GM12878 (cell line): ENCODE measurements at regions of chr12 and their contacts with region 1.

Region 1: GRCh38 chr12:79737875-79738718 is 47.3 kb upstream of the PAWR start:
- DNase-seq: peak; percentile 16
- ATAC-seq: peak; percentile 94
- H3K4me3 ChIP-seq: no peak overlapping the region
- H3K27ac ChIP-seq: no peak overlapping the region
- H3K4me1 ChIP-seq: no peaks in the 10 kb centered on the region
- H3K27me3 ChIP-seq: no peaks in the 10 kb centered on the region; a peak in 1 of 4 replicates
- CTCF ChIP-seq: peak; percentile 62 to 73 (median 65)
- EP300 ChIP-seq: no peak
- POLR2A ChIP-seq: no peak
- RAD21 ChIP-seq: peak; percentile 80

Region 2: DNA sequence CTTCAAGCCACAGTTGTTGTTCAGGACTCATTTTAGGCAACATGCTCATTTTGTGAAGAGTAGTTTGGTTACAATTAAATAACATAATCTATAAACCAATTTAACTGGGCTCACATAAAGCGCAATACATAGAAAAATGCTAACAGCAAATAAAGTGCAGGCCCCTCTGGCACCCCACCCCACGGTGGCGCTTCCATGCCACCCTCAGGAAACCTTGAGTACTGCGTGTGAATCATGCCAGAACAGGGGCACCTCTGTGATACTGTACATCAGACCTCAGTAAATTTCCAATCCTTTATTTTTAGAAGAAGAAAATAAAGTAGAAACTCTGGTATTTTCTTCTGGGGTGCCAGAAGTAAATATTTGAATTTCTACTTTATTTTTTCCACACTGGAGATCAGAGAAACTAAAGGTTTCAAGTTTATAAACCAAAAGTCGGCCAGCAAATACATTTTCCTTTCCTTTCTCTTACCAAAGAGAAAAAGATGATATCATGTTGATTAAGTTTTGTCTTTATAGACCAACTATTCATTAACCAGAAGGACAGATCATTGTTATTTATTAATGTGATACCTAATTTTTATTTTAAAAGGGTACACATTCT is 364.1 kb before region 1 on chr12:
- CTCF ChIA-PET with region 1: no interaction called
- POLR2A ChIA-PET with region 1: no interaction called
- RAD21 ChIA-PET with region 1: no interaction called
- SMC1A ChIA-PET with region 1: no interaction called
- in situ Hi-C with region 1: no loop called
- intact Hi-C with region 1: no loop called
- DNase-seq: no peak
- ATAC-seq: peak; percentile 94
- H3K4me3 ChIP-seq: no peak overlapping the region
- H3K27ac ChIP-seq: no peak overlapping the region
- H3K4me1 ChIP-seq: no peaks in the 10 kb centered on the region
- H3K27me3 ChIP-seq: no peaks in the 10 kb centered on the region
- CTCF ChIP-seq: peak; percentile 48 to 59 (median 58)
- EP300 ChIP-seq: no peak
- POLR2A ChIP-seq: no peak
- RAD21 ChIP-seq: peak; percentile 59

Region 3: DNA sequence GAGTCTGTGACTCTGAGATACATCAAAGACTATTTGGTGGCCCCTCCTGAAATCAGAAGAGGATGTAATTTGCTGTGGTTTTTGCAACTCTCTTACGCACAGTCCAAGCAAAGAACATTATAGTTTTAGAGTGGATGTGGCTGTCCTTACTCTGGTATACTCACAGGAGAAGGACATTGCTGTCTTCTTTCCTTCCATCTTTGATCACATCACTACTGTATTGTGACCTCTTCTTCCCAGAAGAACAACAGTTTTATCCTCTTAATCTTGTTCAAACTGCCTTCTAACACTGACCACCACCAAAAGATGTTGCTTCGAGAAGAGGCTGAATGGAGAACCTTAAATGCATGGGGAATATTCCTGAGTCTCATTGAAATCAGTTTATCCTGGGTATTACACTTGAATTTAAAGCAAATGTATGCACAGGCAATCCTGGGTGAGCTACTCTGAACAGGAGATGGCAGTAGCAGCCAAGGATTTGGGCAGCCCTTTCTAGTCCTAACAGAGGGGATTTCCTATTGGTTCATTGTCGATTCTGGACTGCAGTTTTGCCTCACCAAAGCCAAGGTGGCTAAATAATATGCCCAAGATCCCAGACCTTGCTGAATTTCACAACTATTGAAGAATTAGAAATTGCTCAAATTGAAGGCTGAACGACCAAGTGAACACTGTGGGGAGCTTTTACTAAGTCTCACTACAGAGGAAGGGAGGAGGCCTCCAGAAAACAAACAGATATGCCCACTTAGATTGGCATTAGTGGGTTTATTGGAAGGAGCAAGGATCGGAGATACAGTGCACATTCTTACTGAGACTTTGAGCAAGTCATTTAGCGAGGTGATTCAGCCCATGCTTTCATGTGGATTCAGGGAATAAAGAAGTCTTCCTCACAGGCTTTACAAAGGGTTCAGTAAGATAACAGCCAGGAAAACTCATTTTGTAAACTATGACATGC is 330.1 kb before region 1 on chr12:
- CTCF ChIA-PET with region 1: interaction called, 3 read pairs
- POLR2A ChIA-PET with region 1: no interaction called
- RAD21 ChIA-PET with region 1: interaction called, 3 read pairs
- SMC1A ChIA-PET with region 1: interaction called, 4 read pairs
- in situ Hi-C with region 1: loop called (anchors 10 kb)
- intact Hi-C with region 1: loop called (anchors 1 kb)
- DNase-seq: peak; percentile 9
- ATAC-seq: peak; percentile 99
- H3K4me3 ChIP-seq: no peak overlapping the region
- H3K27ac ChIP-seq: no peak overlapping the region
- H3K4me1 ChIP-seq: no peaks in the 10 kb centered on the region
- H3K27me3 ChIP-seq: no peaks in the 10 kb centered on the region
- CTCF ChIP-seq: peak; percentile 54 to 81 (median 55); a peak in 5 of 6 replicates
- EP300 ChIP-seq: no peak
- POLR2A ChIP-seq: no peak
- RAD21 ChIP-seq: peak; percentile 79

Region 4: DNA sequence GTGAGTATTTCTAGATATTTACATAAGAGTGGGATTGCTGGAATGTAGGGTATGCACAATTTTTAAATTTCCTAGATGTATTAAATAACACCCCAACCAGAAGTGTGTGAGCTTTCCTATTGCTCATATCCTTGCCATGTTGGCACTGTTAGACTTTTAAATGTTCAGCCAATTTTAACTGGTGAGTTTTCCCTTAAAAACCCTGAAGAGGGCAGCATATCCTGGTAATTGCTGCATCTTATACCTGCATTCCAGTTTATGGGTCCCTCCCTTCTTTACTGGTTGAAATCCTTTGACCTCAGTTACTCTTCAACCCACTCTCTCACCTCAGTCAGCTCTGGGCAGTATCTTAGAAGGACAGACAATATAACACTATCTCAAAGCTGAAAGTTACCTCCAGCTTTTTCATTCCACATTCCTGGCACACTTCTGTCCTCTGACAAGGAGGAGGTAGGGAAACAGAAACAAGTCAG is 317.9 kb before region 1 on chr12:
- CTCF ChIA-PET with region 1: interaction called, 4 read pairs
- POLR2A ChIA-PET with region 1: no interaction called
- RAD21 ChIA-PET with region 1: no interaction called
- SMC1A ChIA-PET with region 1: interaction called, 5 read pairs
- in situ Hi-C with region 1: no loop called
- intact Hi-C with region 1: loop called (anchors 1 kb)
- DNase-seq: no peak
- ATAC-seq: peak; percentile 60
- H3K4me3 ChIP-seq: no peak overlapping the region
- H3K27ac ChIP-seq: no peak overlapping the region
- H3K4me1 ChIP-seq: no peaks in the 10 kb centered on the region
- H3K27me3 ChIP-seq: no peaks in the 10 kb centered on the region; a peak in 1 of 4 replicates
- CTCF ChIP-seq: peak; percentile 26 to 38 (median 30); a peak in 4 of 6 replicates
- EP300 ChIP-seq: no peak
- POLR2A ChIP-seq: no peak
- RAD21 ChIP-seq: peak; percentile 46; the same call in 1 of the 2 replicates

Region 5: GRCh38 chr12:79547735-79548609 is 190.1 kb before region 1 on chr12:
- CTCF ChIA-PET with region 1: interaction called, 25 read pairs
- POLR2A ChIA-PET with region 1: no interaction called
- RAD21 ChIA-PET with region 1: interaction called, 3 read pairs
- SMC1A ChIA-PET with region 1: interaction called, 18 read pairs
- in situ Hi-C with region 1: no loop called
- intact Hi-C with region 1: loop called (anchors 2 kb)
- DNase-seq: peak; percentile 9
- ATAC-seq: peak; percentile 88
- H3K4me3 ChIP-seq: no peak overlapping the region
- H3K27ac ChIP-seq: no peak overlapping the region
- H3K4me1 ChIP-seq: no peaks in the 10 kb centered on the region
- H3K27me3 ChIP-seq: no peaks in the 10 kb centered on the region
- CTCF ChIP-seq: peak; percentile 69 to 74 (median 71)
- EP300 ChIP-seq: no peak
- POLR2A ChIP-seq: no peak
- RAD21 ChIP-seq: peak; percentile 74

Region 6: DNA sequence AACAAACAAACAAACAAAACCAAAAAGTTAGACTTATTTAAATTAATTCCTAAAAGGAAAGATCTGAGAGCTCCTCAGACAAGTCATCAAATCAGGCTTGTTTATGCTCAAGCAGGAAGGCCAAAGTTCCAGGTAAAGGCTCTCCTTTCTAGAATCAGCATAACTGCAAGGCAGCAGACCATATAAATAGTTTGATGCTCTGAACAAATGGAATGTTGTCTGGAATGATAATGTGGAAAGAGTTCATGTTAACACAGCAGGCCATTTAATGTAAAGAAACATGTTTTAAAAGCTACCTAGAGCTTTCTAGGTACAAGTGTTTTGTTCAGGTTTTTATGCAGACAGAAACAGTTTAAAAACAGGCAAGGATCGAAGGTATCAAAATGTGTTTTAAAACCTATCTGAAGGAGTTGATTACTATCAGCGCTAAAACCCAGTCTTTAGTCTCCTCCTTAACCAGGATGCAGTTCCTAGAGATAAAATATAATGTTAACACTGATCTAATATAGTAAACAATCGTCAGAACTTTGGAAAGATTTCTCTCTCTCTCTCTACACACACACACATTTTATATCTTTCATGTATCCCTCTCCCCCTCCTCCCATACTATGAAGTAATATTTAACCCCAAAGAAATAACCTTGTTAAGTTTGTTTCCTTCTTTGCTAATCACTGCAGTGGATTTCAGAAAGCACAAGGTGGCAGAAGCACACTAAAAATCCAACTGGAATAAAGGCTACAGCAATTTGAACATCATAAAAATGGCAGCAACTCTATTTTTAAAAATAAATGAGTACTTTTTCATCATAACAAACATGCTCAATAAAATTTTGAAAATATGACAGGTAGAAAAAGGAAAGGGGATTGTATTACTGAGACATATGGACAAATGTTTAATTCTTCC is 182.8 kb before region 1 on chr12:
- CTCF ChIA-PET with region 1: interaction called, 15 read pairs
- POLR2A ChIA-PET with region 1: no interaction called
- RAD21 ChIA-PET with region 1: interaction called, 5 read pairs
- SMC1A ChIA-PET with region 1: interaction called, 4 read pairs
- in situ Hi-C with region 1: loop called (anchors 5 kb)
- intact Hi-C with region 1: no loop called
- DNase-seq: no peak
- ATAC-seq: peak; percentile 39; the same call in 2 of the 3 replicates
- H3K4me3 ChIP-seq: no peak overlapping the region
- H3K27ac ChIP-seq: no peak overlapping the region
- H3K4me1 ChIP-seq: no peaks in the 10 kb centered on the region
- H3K27me3 ChIP-seq: no peaks in the 10 kb centered on the region
- CTCF ChIP-seq: peak; percentile 40 to 84 (median 48); a peak in 5 of 6 replicates
- EP300 ChIP-seq: no peak
- POLR2A ChIP-seq: no peak
- RAD21 ChIP-seq: peak; percentile 93